Activated B cell treated with CpG ODN at 0.5 μM for 24 hours (primary cell): ENCODE measurements at regions of chr7 and their contacts with region 1.

Region 1: GRCh38 chr7:5237286-5237685 is 45.5 kb upstream of the SLC29A4 start:
- DNase-seq: no peak
- ATAC-seq: no peak
- H3K4me3 Mint-ChIP-seq: peak overlapping the region; percentile 60
- H3K27ac Mint-ChIP-seq: no peak overlapping the region
- H3K4me1 Mint-ChIP-seq: peaks cover 62% of the 10 kb centered on the region
- H3K27me3 Mint-ChIP-seq: peaks cover 2% of the 10 kb centered on the region
- CTCF ChIP-seq: no peak

Region 2: DNA sequence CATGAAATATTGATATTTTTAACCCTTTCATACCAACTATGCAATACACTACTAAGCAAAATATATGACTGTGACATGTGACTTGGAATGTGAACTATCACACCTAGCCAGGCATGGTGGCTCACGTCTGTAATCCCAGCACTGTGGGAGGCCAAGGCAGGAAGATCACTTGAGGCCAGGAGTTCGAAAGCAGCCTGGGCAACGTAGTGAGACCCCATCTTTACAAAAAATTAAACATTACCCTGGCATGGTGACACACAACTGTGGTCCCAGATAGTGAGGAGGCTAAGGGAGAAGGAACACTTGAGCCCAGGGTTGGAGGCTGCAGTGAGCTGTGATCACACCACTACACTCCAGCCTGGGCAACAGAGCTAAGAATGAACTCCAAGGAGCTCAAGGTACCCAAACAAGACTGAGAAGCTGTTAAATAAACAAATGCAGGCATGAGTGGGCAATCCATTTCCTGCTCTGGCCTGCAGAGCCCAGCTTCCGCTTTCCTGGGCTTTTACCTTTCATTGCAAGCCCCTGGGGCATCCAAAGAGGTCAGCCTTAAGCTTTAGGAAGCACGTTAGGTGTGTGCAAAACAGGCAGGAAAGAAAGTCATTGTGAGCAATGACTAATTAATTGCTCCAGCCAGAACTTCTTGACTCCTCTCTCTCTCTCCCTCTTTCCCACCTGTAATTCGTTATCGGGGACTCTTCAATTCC is 717.3 kb before region 1 on chr7:
- CTCF ChIA-PET with region 1: no interaction called
- POLR2A ChIA-PET with region 1: no interaction called
- intact Hi-C with region 1: no loop called
- DNase-seq: no peak
- ATAC-seq: no peak
- H3K4me3 Mint-ChIP-seq: no peak overlapping the region
- H3K27ac Mint-ChIP-seq: no peak overlapping the region
- H3K4me1 Mint-ChIP-seq: no peaks in the 10 kb centered on the region
- H3K27me3 Mint-ChIP-seq: peaks cover 4% of the 10 kb centered on the region
- CTCF ChIP-seq: no peak

Region 3: GRCh38 chr7:5139998-5140397 is 97.3 kb before region 1 on chr7:
- CTCF ChIA-PET with region 1: no interaction called
- POLR2A ChIA-PET with region 1: interaction called, 6 read pairs
- intact Hi-C with region 1: loop called (anchors 2 kb)
- DNase-seq: no peak
- ATAC-seq: no peak
- H3K4me3 Mint-ChIP-seq: no peak overlapping the region
- H3K27ac Mint-ChIP-seq: no peak overlapping the region
- H3K4me1 Mint-ChIP-seq: peaks cover 12% of the 10 kb centered on the region
- H3K27me3 Mint-ChIP-seq: peaks cover 2% of the 10 kb centered on the region
- CTCF ChIP-seq: no peak

Region 4: DNA sequence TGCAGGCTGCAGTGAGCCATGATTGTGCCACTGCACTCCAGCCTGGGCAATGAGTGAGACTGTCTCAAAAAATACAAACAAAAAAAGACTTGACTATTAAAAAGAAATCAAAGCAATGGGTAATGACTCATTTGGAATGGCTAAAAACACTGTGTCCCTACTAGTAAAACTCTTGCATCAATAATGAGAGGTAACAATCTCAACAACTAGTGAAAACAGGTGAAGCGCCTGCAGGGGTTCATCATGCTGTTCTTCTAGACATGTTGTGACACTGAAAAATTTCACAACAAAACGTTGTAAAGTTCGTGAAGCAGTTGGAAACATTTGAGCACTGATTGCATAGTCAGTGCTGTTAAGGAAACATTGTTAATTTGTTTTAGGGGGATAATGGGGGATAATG is 18.5 kb after region 1 on chr7:
- CTCF ChIA-PET with region 1: no interaction called
- POLR2A ChIA-PET with region 1: interaction called, 11 read pairs
- intact Hi-C with region 1: no loop called
- DNase-seq: no peak
- ATAC-seq: no peak
- H3K4me3 Mint-ChIP-seq: no peak overlapping the region
- H3K27ac Mint-ChIP-seq: no peak overlapping the region
- H3K4me1 Mint-ChIP-seq: no peaks in the 10 kb centered on the region
- H3K27me3 Mint-ChIP-seq: peaks cover 6% of the 10 kb centered on the region
- CTCF ChIP-seq: no peak

Region 5: DNA sequence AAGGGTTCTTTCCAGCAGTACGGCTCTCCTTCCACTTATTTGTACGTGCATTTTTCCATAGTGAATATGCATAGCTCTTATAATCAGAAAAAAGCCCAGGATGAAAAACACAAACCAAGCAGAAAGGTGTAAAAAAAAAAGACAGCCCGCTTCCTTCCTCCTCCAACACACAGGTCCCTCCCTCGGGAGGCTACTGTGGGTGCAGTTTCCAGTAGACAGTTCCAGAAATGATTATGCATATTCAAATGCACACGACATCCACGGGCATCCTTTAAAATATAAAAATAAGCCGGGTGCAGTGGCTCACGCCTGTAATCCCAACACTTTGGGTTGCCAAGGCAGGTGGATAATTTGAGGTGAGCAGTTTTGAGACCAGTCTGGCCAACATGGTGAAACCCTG is 126.4 kb after region 1 on chr7:
- CTCF ChIA-PET with region 1: interaction called, 12 read pairs
- POLR2A ChIA-PET with region 1: no interaction called
- intact Hi-C with region 1: loop called (anchors 1 kb)
- DNase-seq: no peak
- ATAC-seq: no peak
- H3K4me3 Mint-ChIP-seq: no peak overlapping the region
- H3K27ac Mint-ChIP-seq: no peak overlapping the region
- H3K4me1 Mint-ChIP-seq: peaks cover 22% of the 10 kb centered on the region
- H3K27me3 Mint-ChIP-seq: no peaks in the 10 kb centered on the region
- CTCF ChIP-seq: no peak

Region 6: GRCh38 chr7:5704534-5704922 is 467.2 kb after region 1 on chr7:
- CTCF ChIA-PET with region 1: no interaction called
- POLR2A ChIA-PET with region 1: no interaction called
- intact Hi-C with region 1: loop called (anchors 2 kb)
- DNase-seq: peak; percentile 49
- ATAC-seq: peak; percentile 31
- H3K4me3 Mint-ChIP-seq: no peak overlapping the region
- H3K27ac Mint-ChIP-seq: no peak overlapping the region
- H3K4me1 Mint-ChIP-seq: peaks cover 40% of the 10 kb centered on the region
- H3K27me3 Mint-ChIP-seq: no peaks in the 10 kb centered on the region
- CTCF ChIP-seq: peak; percentile 78

Region 7: GRCh38 chr7:6545398-6546126 is 1308.3 kb after region 1 on chr7:
- CTCF ChIA-PET with region 1: no interaction called
- POLR2A ChIA-PET with region 1: no interaction called
- intact Hi-C with region 1: no loop called
- DNase-seq: no peak
- ATAC-seq: no peak
- H3K4me3 Mint-ChIP-seq: no peak overlapping the region
- H3K27ac Mint-ChIP-seq: no peak overlapping the region
- H3K4me1 Mint-ChIP-seq: peaks cover 7% of the 10 kb centered on the region
- H3K27me3 Mint-ChIP-seq: peaks cover 2% of the 10 kb centered on the region
- CTCF ChIP-seq: no peak